Uterus (tissue), 4 donors: ENCODE measurements at regions of chr19 and their contacts with region 1.

Region 1: DNA sequence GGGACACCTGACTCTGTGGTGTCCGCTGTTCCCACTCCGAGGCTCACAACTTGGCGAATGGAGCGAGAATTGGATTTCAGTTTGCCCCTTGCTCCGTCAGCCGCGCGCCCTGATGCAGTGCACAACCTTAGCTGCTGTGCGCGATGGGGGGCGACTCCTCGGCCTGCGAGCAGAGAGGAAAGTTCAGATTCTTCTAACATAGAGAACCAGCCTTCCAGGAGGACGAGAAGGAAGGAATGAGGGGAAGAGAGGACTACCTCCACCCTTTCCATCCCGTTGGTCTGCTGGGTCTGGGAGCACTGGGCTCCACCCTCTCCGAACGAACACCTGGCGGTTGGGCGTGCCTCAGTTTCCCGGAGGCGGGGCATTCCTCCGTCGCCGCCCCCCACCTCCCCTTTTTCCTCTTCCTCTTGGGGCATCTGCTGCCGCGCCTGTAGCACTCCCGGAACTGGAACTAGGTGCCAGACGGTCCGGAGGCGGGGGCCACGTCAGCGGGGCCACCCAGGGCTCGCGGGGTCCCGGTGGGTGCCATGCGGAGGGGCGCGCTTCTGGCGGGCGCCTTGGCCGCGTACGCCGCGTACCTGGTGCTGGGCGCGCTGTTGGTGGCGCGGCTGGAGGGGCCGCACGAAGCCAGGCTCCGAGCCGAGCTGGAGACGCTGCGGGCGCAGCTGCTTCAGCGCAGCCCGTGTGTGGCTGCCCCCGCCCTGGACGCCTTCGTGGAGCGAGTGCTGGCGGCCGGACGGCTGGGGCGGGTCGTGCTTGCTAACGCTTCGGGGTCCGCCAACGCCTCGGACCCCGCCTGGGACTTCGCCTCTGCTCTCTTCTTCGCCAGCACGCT is at the start of gene KCNK6:
- DNase-seq: peak; percentile 40 to 59
- H3K4me3 ChIP-seq: peak within 1 kb of the TSS; percentile 49 to 54
- H3K27ac ChIP-seq: peak within 1 kb of the TSS; percentile 68 to 69
- H3K4me1 ChIP-seq: peaks cover 0 to 14% of the 10 kb centered on the region in 2 donors
- H3K27me3 ChIP-seq: peaks cover 0 to 3% of the 10 kb centered on the region in 2 donors
- CTCF ChIP-seq: no peak
- POLR2A ChIP-seq: peak; percentile 36 to 41
- total RNA-seq, gene KCNK6: 0.59 to 60.6 (median 4.3) TPM

Region 2: DNA sequence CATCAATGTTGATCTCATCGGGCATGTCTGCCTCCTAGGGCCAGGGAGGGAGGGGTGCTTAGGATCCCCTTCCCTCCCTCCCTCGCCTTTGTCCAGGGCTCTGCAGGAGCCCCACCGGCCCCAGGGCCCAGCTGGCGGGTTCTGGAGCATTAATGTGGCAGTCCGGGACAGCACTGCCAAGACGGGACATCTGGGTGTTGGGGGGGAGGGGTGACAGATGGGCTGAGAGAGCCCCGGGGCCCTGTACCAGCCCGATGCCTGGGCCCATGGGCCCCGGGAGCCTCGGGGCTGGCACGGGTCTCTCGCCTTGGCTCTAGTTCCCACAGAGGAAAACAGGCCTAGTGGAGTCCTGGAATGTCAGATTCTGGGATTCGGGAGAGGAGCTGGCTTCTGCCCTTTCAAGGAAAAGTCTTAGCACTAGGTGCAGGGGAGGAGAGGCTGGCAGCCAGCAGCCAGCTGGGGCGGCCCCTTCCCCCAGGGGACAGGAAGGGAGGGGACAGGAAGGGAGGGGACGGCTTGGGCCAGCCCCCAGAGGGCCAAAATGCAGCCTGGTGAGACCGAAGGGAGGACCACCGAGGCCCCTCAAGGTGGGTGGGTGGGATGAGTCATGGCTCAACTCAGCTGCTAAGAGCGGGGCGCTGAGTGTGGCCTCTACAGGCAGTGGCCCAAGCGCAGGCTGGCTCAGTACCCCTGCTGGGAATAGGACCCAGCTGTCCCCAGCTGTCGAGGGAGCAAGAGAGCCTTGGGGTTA is 66.5 kb before region 1 on chr19:
- intact Hi-C with region 1: loop called (anchors 2 kb)
- DNase-seq: peak; percentile 52 to 61
- H3K4me3 ChIP-seq: peak overlapping the region; percentile 23 to 35
- H3K27ac ChIP-seq: peak overlapping the region; percentile 92
- H3K4me1 ChIP-seq: peaks cover 0 to 9% of the 10 kb centered on the region in 2 donors
- H3K27me3 ChIP-seq: no peaks in the 10 kb centered on the region
- CTCF ChIP-seq: no peak
- POLR2A ChIP-seq: peak in 1 of 2 donors; percentile 16

Region 3: GRCh38 chr19:38351865-38352395 is 32.3 kb after region 1 on chr19:
- intact Hi-C with region 1: no loop called
- DNase-seq: no peak
- H3K4me3 ChIP-seq: no peak overlapping the region
- H3K27ac ChIP-seq: no peak overlapping the region
- H3K4me1 ChIP-seq: no peaks in the 10 kb centered on the region
- H3K27me3 ChIP-seq: no peaks in the 10 kb centered on the region
- CTCF ChIP-seq: no peak
- POLR2A ChIP-seq: no peak